Ovary (tissue), 10 donors: ENCODE measurements at regions of chr20 and their contacts with region 1.

Region 1: GRCh38 chr20:19212821-19213502 is 520 bp downstream of the SLC24A3 start:
- DNase-seq: peak; percentile 82 to 86 (median 85)
- H3K4me3 ChIP-seq: peak overlapping the region; percentile 78
- H3K27ac ChIP-seq: peak overlapping the region; percentile 75 to 85
- H3K4me1 ChIP-seq: peaks cover 8% of the 10 kb centered on the region
- H3K27me3 ChIP-seq: no peaks in the 10 kb centered on the region
- CTCF ChIP-seq: peak; percentile 23 to 75 (median 74)
- EP300 ChIP-seq: no peak
- POLR2A ChIP-seq: no peak

Region 2: DNA sequence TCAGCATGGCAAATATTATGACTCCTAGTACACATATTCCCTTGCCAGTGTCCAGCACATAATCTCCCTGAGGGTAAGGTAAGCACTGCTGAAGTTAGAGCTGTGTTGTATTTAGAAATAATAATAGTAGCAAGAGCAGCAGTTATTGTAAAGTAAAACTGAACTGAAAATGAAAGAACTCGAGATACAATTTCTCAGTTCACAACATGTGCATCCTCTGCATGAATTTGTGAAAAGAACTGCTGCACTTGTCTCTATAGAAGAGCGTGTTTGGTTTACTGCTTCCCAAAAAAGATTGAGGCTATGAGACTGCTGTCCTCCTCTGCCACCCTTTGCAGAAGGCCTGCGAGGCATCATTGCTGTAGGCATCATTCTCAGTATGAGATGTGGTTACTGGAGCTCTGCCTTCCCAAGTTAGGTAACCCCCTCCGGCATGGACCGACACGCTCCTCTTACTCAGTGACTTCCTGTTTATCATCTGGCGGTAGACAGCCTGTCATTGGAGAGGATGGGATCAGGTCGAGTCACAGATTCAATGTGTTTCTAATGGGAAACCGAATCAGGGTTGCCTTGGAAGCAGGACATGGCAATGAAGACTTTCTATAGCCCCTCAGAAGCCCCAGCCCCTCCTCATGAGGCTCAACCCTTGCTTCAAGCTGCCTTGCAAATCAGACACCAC is 47.6 kb after region 1 on chr20:
- intact Hi-C with region 1: loop called in 1 of 4 experiments (anchors 10 kb)
- DNase-seq: no peak
- H3K4me3 ChIP-seq: no peak overlapping the region
- H3K27ac ChIP-seq: no peak overlapping the region
- H3K4me1 ChIP-seq: peaks cover 5% of the 10 kb centered on the region
- H3K27me3 ChIP-seq: no peaks in the 10 kb centered on the region
- CTCF ChIP-seq: no peak
- EP300 ChIP-seq: no peak
- POLR2A ChIP-seq: no peak

Region 3: GRCh38 chr20:19275630-19276072 is 62.7 kb after region 1 on chr20:
- intact Hi-C with region 1: loop called in 2 of 4 experiments (anchors 5 to 10 kb)
- DNase-seq: peak; percentile 87 to 95 (median 93)
- H3K4me3 ChIP-seq: no peak overlapping the region
- H3K27ac ChIP-seq: peak overlapping the region; percentile 84 to 86
- H3K4me1 ChIP-seq: peaks cover 18% of the 10 kb centered on the region
- H3K27me3 ChIP-seq: no peaks in the 10 kb centered on the region
- CTCF ChIP-seq: no peak
- EP300 ChIP-seq: no peak
- POLR2A ChIP-seq: no peak

Region 4: DNA sequence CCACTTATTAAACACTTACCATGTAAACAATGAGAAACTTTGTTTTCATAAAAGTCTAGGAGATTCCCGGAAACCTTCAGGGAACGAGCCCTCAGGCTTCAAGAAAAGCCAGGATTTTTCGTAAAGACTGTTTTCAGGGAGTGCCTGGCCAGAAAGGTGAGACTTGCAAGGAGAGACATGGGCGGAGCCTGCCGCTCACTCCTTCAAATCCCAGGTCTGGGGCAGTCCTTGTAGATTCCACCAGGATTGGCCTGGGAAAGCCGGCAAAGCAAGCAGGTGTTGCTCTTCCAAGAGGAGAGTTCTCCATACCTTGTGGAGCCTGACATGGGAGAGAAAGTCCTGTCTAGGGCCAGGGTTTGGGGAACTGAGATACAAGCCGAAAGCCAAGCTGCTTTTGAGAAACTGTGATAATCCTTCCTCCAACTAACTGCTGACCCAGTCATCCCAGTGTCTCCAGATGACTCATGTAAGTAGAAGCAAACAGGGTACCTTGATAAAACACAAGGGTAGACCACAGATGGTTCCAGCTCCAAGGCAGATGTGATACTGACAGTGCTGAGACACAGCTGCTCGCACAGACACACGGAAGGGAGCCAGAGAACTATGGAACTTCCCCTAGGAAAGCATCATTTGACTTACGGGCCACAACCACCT is 734.8 kb after region 1 on chr20:
- intact Hi-C with region 1: no loop called
- DNase-seq: no peak
- H3K4me3 ChIP-seq: no peak overlapping the region
- H3K27ac ChIP-seq: no peak overlapping the region
- H3K4me1 ChIP-seq: no peaks in the 10 kb centered on the region
- H3K27me3 ChIP-seq: no peaks in the 10 kb centered on the region
- CTCF ChIP-seq: no peak
- EP300 ChIP-seq: no peak
- POLR2A ChIP-seq: no peak